ENCODE measurements at regions of chr7 and their contacts with region 1.

Region 1: GRCh38 chr7:21507626-21508343 is 35.1 kb upstream of the DNAH11 start:
- DNase-seq: peak; percentile 50
- H3K4me3 Mint-ChIP-seq: no peak overlapping the region
- H3K27ac Mint-ChIP-seq: no peak overlapping the region
- H3K4me1 Mint-ChIP-seq: no peaks in the 10 kb centered on the region
- H3K27me3 Mint-ChIP-seq: no peaks in the 10 kb centered on the region

Region 2: GRCh38 chr7:21261627-21262594 is 245.9 kb before region 1 on chr7:
- CTCF ChIA-PET with region 1: interaction called, 4 read pairs
- intact Hi-C with region 1: loop called (anchors 1 kb)
- DNase-seq: peak; percentile 62
- H3K4me3 Mint-ChIP-seq: no peak overlapping the region
- H3K27ac Mint-ChIP-seq: no peak overlapping the region
- H3K4me1 Mint-ChIP-seq: peaks cover 7% of the 10 kb centered on the region
- H3K27me3 Mint-ChIP-seq: peaks cover 9% of the 10 kb centered on the region

Region 3: DNA sequence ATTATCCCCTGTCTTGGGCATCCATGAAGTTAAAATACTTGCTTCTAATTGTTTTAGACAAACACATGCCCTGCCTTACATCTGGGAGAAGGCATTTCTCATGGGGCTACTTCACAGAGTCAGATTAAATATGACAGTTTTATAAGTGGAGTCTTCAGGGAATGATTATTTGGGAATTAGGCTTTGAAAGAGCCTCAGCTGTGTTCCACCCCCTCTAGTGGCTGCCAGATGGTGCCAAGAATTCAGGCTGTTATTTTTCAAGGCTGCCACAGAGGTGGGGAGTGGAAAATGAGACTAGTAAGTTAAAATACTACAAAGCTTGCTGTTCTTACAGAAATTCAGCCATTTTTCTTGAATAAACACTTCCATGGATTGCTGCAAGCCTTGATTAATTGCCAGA is 10.7 kb before region 1 on chr7:
- CTCF ChIA-PET with region 1: no interaction called
- intact Hi-C with region 1: no loop called
- DNase-seq: no peak
- H3K4me3 Mint-ChIP-seq: no peak overlapping the region
- H3K27ac Mint-ChIP-seq: no peak overlapping the region
- H3K4me1 Mint-ChIP-seq: no peaks in the 10 kb centered on the region
- H3K27me3 Mint-ChIP-seq: no peaks in the 10 kb centered on the region